Activated T-helper 2 cell treated with anti-CD3 and anti-CD28 coated beads, Interferon-gamma antibody, Interleukin-2, Interleukin-4, amounts not matched to agents 10 μg/mL and 5 μg/mL and 100 μg/mL, durations not matched to agents 14 hours and 24 hours and 36 hours (primary cell): ENCODE measurements at regions of chr1 and their contacts with region 1.

Region 1: DNA sequence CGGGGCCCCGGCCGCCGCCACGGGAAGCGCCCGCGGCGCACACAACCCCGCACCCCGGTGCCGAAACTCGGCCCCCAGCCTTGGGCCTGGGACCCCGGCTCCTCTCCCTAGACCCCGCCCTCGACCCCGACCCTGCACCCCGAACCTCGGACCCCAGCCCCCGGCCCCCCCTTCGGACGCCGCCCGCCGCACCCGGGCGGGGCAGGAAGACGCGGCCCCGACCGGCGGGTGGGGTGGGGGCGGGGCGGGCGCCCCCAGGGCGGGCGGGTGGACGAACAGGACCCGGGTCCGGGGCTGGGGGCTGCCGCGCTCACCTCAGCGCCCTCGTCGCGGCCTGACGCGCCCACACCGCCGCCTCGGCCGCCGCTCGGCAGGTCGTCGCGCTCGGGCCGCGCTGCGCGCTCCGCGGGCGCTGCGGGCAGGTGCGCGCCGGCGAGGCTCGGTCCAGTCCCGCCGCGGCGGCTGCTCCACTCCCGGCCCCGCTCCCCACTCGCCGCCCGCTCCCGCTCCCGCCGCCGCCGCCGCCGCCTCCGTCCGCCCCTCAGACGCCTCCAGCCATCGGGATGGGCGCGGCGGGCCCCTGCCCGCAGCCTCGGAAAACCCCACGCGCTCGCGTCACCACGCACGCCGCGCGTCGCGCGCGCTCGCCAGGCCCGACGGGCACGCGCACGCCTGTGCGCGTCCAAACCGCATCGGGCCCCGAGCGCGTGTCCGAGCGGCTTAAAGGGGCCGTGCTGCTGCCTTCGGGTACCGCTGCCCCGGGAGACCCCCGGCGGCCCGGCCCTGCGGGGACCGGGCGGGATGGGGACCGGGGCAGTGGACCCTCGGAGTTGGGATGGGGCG is at the start of gene GNB1:
- DNase-seq: peak; percentile 87
- H3K4me3 Mint-ChIP-seq: peak within 1 kb of the TSS; percentile 78
- H3K27ac Mint-ChIP-seq: peak within 1 kb of the TSS; percentile 84
- H3K4me1 Mint-ChIP-seq: peaks cover 37% of the 10 kb centered on the region
- H3K27me3 Mint-ChIP-seq: no peaks in the 10 kb centered on the region
- total RNA-seq, gene GNB1: 452 and 471 TPM in 2 replicates

Region 2: GRCh38 chr1:1540090-1540817 is 350.5 kb before region 1 on chr1 and contains the start of gene TMEM240:
- intact Hi-C with region 1: no loop called
- DNase-seq: peak; percentile 20
- H3K4me3 Mint-ChIP-seq: no peak within 1 kb of the TSS
- H3K27ac Mint-ChIP-seq: no peak within 1 kb of the TSS
- H3K4me1 Mint-ChIP-seq: no peaks in the 10 kb centered on the region
- H3K27me3 Mint-ChIP-seq: peaks cover 1% of the 10 kb centered on the region
- total RNA-seq, gene TMEM240: 0.25 and 0.48 TPM in 2 replicates

Region 3: GRCh38 chr1:1826356-1827088 is 64.2 kb before region 1 on chr1:
- intact Hi-C with region 1: loop called (anchors 5 kb)
- DNase-seq: no peak
- H3K4me3 Mint-ChIP-seq: no peak overlapping the region
- H3K27ac Mint-ChIP-seq: peak overlapping the region; percentile 52
- H3K4me1 Mint-ChIP-seq: peaks cover 32% of the 10 kb centered on the region
- H3K27me3 Mint-ChIP-seq: no peaks in the 10 kb centered on the region